ENCODE measurements at regions of chr7 and their contacts with region 1.

Region 1: GRCh38 chr7:140033036-140033435 is 29.7 kb downstream of the PARP12 start:
- DNase-seq: no peak
- H3K4me3 ChIP-seq: no peak overlapping the region
- H3K27ac ChIP-seq: no peak overlapping the region
- H3K4me1 ChIP-seq: no peaks in the 10 kb centered on the region
- H3K27me3 ChIP-seq: no peaks in the 10 kb centered on the region
- CTCF ChIP-seq: no peak
- POLR2A ChIP-seq: no peak

Region 2: DNA sequence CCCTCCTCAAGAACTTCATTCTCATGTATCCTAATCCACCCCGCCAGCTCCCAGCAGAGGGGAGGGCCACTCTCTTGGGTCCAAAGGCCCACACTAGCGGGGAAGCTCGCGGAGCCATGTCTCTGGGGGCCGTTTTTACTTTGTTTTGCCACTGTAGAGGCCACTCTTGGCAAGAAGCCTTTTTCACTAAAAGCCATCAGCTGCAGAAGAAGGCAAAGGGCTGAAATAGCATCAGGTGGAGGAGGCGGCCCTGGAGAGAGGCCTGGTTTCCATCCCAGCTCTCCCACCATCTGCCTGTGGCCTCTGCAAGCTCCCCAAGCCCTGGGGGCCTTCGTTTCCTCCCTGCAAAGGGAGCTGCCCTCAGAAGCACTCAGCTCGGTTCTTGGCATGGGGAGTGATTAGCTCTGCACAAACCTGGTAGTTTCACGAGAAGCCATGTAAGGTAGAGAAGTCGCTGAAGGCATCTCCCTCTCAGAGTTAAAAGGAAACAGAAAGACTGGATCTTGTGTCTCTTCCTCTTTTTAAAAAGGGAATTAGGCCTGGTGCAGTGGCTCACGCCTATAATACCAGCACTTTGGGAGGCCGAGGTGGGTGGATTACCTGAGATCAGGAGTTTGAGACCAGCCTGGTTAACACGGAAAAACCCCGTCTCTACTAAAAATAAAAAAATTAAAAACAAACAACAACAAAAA is 40.5 kb before region 1 on chr7:
- intact Hi-C with region 1: no loop called
- DNase-seq: no peak
- H3K4me3 ChIP-seq: no peak overlapping the region
- H3K27ac ChIP-seq: no peak overlapping the region
- H3K4me1 ChIP-seq: no peaks in the 10 kb centered on the region
- H3K27me3 ChIP-seq: no peaks in the 10 kb centered on the region
- CTCF ChIP-seq: no peak
- POLR2A ChIP-seq: no peak

Region 3: DNA sequence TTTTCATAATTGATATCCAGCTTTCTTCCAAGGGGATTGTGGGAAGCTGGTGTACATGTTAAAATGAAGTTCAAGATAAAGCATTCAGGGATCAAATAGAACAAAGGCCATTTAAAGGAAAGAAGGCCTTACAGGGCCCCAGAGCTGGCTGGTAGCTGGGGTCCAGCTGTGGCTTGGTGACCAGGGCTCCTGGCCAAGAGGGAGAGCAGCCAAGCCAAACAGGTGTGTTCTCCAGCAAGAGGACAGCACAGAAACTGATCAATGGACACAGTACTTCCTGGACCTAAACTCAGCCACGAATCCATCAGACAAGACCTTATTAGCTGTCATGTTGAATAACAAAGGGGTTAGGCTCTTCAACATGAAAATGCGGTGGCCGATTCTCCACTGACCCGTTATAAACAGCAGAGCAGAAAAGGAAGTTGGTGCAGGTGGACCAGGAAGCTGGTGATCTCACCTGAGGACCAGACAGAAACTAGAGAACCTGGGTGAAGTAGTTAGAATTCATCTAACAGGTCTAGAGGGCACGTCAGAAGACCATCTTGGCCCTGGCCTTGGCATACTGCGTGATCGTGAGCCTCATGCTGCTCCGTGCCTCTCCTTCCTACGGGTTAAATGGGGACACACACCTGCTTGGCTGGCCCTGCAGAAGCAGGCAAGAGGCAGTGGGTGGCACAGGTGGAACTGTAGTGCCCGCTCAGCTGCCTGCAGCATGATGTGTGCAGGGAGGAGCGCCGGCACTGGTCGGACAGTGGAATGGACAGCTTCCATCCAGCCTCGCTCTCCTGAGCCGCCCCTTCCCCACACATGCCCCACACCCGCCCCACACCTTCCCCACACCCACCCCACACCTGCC is 24.1 kb before region 1 on chr7:
- intact Hi-C with region 1: loop called (anchors 1 kb)
- DNase-seq: no peak
- H3K4me3 ChIP-seq: no peak overlapping the region
- H3K27ac ChIP-seq: no peak overlapping the region
- H3K4me1 ChIP-seq: no peaks in the 10 kb centered on the region
- H3K27me3 ChIP-seq: no peaks in the 10 kb centered on the region
- CTCF ChIP-seq: no peak
- POLR2A ChIP-seq: no peak

Region 4: DNA sequence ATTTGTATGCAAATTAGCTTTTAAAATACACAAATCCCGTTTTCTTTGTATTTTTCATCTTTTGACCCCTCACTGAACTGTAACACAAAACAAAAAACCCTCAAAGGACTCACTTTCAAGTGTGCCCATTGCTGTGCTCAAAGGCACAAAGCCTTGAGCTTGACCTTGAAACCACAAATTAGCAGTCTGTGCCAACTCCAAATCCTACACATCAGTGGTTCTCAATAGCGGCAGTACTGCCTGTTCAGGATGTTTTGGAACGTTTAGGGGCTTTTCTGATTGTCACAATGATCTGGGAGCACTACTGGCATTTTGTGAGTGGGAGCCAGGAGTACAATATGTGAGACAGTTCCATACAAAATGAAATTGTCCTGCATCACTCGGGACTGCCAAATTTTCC is 88.3 kb after region 1 on chr7:
- intact Hi-C with region 1: loop called (anchors 5 kb)
- DNase-seq: no peak
- H3K4me3 ChIP-seq: no peak overlapping the region
- H3K27ac ChIP-seq: no peak overlapping the region
- H3K4me1 ChIP-seq: no peaks in the 10 kb centered on the region
- H3K27me3 ChIP-seq: no peaks in the 10 kb centered on the region
- CTCF ChIP-seq: no peak
- POLR2A ChIP-seq: no peak